Posterior vena cava (tissue), 2 donors: ENCODE measurements at regions of chr3 and their contacts with region 1.

Region 1: GRCh38 chr3:51371943-51372557 is 13.0 kb upstream of the MANF start:
- DNase-seq: peak; percentile 22

Region 2: DNA sequence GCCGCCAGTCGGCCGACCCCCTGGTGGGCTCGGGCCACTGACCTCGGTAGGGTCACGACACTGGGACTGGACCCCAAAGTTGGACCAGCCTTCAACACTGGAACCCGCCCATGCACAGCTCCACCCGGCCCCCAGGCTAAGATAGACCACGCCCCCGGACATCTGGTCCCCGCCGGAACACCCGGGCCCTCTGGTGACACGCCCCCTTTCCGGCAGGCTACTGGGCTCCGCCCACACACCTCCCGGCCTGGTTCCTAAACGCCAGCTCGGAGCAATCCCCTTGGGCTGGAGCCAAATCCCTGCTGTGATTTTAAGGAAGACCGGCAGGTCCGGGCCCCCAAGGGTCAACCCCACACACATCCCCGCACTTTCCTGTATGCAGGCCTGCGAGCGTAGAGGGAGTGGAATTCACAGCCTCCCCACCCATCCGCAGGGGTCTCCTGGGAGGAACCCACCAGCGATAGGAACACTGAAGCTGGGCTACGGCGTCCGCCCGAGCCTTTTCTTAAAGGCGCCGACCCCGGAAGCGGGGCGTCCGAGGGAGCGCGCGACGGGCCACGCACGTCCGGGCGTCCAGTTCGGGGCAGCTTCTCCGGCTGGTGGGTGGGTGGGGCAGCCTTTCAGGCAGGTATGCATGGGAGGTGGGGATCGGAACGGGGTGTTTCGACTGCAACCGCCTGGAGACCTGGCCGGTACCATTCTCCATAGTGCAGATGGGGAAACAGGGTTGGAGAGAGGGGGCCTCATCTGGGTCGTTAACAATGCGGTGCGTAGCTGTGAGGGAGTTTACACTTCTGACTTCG is 802.9 kb before region 1 on chr3 and contains the start of gene HEMK1:
- intact Hi-C with region 1: loop called in 1 of 2 experiments (anchors 10 kb)
- DNase-seq: peak; percentile 99
- total RNA-seq, gene HEMK1: 10.9 to 12.6 TPM

Region 3: DNA sequence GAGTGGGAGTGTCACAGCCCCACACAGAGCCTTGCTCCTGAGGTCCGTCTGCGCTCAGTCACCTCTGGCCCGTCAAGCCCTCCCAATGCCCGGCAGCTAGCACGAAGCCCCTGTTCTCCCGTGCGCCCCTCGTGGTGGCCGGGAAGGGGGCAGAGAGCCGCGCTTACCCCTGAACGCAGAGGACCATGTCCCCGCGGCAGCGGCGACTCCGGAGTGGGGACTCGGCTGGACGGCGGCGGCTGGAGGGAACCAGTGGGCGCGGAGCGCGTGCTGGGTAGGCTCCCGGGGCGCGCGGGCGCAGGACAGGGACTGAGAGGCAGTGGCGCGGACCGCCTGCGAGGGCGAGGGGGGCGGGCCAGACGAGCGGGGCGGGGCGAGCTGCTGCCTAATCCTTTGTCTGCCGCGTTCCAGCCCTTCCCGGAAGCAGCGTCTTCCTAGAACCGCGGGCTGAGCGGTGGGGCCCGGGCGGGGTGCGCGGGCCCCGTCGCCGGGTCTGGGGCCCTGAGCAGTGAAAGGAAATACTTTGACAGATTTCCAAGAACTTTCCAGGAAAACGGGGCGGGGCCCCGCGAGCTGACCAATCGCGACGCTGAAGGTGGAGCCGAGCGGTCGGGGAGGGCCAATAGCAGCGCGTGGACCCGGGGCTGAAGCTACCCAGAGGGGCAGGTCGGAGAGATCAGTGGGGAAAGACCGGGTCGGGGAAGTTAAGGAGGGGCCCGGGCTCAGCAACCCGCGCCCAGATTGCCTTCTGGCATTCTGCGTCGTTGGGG is 760.4 kb before region 1 on chr3 and contains the start of gene CISH:
- intact Hi-C with region 1: loop called in 1 of 2 experiments (anchors 10 kb)
- DNase-seq: peak; percentile 98
- total RNA-seq, gene CISH: 8.6 to 12.5 TPM

Region 4: DNA sequence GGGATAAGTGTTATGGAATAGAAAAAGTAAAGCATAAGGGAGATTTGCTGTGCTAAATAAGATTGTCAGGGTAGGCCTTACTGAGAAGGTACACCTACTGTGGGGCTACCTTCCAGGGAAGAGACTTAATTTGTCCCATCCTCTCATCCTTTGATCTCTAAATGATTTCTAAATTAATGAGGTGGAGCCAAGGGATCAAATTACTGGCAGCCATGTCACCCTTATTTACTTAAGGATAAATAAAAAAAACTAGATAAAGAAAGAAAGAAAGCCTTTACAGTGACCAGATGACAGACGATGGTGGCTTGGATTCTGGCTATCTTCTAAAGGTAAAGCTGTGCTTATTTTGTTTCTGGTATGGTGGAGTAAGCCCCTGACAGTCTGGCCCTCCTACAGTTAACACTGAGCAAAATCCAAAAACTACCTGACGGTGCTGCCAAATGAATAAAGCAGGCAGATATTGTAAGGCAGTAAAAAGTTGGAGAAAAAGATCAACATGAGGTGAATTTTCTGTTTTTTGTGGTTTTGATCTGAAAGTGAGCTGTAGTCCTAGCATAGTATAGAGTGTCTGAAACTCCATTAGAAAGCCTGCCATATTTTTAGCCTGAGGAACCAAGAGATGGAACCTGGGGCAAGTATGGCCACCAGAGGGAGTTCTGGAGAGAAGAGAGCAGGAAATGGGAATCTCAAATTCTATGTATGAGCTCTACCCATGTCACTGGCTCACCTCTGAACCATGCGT is 272.1 kb before region 1 on chr3:
- intact Hi-C with region 1: loop called (anchors 5 to 10 kb)
- DNase-seq: peak; percentile 77